Activated B cell treated with CpG ODN at 0.5 μM for 24 hours (primary cell): ENCODE measurements at regions of chr18 and their contacts with region 1.

Region 1: DNA sequence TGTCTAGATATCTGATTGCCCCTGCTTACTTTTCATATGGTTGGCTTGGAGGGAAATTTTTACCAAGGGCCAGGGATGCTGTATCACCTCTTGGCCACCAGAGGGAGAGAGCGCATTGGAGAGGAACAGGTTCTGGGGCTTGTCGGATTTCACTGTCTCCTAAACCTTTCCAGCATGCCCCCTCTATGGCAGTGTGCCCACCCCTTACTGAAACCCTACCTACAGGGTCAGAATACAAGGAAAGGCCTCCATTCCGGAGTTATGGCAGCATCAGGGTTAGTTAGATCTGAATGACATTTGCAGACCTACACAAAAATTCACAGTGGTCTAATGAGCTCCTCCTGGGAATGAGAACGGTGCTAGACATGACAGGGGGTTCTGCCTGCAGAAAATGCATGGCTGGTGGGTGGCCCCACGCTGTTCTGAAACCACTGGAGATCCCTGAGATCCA is 5.8 kb downstream of the SLC14A2 start:
- DNase-seq: no peak
- ATAC-seq: peak; percentile 64
- H3K4me3 Mint-ChIP-seq: no peak overlapping the region
- H3K27ac Mint-ChIP-seq: no peak overlapping the region
- H3K4me1 Mint-ChIP-seq: no peaks in the 10 kb centered on the region
- H3K27me3 Mint-ChIP-seq: peaks cover 13% of the 10 kb centered on the region
- CTCF ChIP-seq: peak; percentile 96

Region 2: DNA sequence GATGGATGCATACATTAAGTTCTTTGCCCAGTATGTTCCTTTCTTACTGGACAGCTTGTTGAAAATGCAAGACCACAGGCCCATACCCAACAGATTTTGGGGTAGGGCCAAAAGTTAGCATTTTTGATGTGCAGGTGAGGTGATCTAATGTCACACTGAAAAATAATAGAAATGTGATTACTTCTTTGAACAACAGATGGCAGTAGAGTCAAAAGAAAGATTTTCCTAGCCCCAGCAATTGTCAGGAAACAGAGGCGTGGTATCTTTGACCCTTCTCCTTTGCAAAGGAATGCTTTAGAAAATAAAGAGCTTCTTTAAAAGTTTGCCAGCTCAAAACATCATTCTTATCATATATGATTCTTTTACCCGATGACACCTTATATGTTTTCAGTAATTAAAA is 2000.2 kb before region 1 on chr18:
- CTCF ChIA-PET with region 1: no interaction called
- POLR2A ChIA-PET with region 1: no interaction called
- intact Hi-C with region 1: loop called (anchors 2 kb)
- DNase-seq: no peak
- ATAC-seq: no peak
- H3K4me3 Mint-ChIP-seq: no peak overlapping the region
- H3K27ac Mint-ChIP-seq: no peak overlapping the region
- H3K4me1 Mint-ChIP-seq: no peaks in the 10 kb centered on the region
- H3K27me3 Mint-ChIP-seq: peaks cover 5% of the 10 kb centered on the region
- CTCF ChIP-seq: no peak

Region 3: GRCh38 chr18:45608400-45608799 is 12.7 kb before region 1 on chr18:
- CTCF ChIA-PET with region 1: interaction called, 13 read pairs
- POLR2A ChIA-PET with region 1: no interaction called
- intact Hi-C with region 1: no loop called
- DNase-seq: no peak
- ATAC-seq: no peak
- H3K4me3 Mint-ChIP-seq: no peak overlapping the region
- H3K27ac Mint-ChIP-seq: no peak overlapping the region
- H3K4me1 Mint-ChIP-seq: no peaks in the 10 kb centered on the region
- H3K27me3 Mint-ChIP-seq: no peaks in the 10 kb centered on the region
- CTCF ChIP-seq: no peak

Region 4: GRCh38 chr18:45910405-45911023 is 289.4 kb after region 1 on chr18:
- CTCF ChIA-PET with region 1: no interaction called
- POLR2A ChIA-PET with region 1: no interaction called
- intact Hi-C with region 1: loop called (anchors 2 kb)
- DNase-seq: peak; percentile 23
- ATAC-seq: peak; percentile 72
- H3K4me3 Mint-ChIP-seq: no peak overlapping the region
- H3K27ac Mint-ChIP-seq: no peak overlapping the region
- H3K4me1 Mint-ChIP-seq: no peaks in the 10 kb centered on the region
- H3K27me3 Mint-ChIP-seq: no peaks in the 10 kb centered on the region
- CTCF ChIP-seq: peak; percentile 42

Region 5: DNA sequence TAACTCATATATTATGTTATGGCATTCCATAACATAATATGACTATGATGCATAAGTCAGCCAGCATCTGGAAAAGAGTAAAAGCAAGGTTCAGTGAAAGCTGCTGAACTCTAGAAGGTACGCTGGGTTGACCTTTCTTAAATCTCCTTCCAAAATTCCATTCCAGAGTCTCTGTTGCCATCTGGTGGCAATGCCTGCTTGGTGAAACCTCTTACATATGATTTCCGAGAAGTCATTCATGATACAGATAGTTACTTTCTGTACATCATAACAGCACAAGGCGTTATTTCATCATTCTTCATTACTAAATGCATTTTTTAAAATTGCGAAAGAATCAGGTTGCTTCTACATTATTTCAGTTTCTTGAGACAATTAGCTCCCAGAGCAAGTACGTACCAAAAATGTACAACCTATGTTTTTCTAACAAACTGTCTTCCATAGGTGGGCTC is 353.0 kb after region 1 on chr18:
- CTCF ChIA-PET with region 1: no interaction called
- POLR2A ChIA-PET with region 1: no interaction called
- intact Hi-C with region 1: loop called (anchors 1 kb)
- DNase-seq: no peak
- ATAC-seq: peak; percentile 54
- H3K4me3 Mint-ChIP-seq: no peak overlapping the region
- H3K27ac Mint-ChIP-seq: no peak overlapping the region
- H3K4me1 Mint-ChIP-seq: peaks cover 4% of the 10 kb centered on the region
- H3K27me3 Mint-ChIP-seq: no peaks in the 10 kb centered on the region
- CTCF ChIP-seq: no peak

Region 6: DNA sequence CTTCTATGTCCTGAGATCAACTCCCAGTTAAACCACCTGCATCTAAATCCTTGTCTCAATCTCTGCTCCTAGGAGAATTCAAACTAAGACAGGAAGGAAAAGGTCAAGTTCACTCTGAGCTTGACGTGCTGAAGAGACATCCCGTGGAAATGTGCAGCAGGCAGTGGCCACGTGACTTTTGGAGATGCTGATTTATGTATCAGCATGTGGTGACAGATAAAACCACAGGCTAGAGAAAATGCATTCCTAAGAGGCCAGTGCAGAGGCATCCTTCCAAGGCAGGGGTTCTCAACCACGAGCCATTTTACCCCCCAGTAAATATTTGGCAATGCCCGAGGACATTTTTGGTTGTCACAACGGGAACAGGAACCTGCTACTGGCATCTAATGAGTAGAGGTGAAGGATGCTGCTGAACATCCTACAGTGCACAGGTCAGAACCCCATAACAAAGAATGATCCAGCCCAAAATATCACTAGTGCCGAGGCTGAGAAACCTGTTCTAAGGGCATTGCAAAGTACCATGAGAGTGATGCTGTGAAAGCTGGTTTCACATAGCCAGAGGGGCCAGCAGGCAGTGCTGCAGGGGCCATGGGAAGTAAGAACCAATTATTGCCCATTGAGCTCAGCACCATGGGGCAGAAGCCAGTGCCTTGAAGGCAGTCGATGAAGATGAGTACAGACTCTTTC is 657.5 kb after region 1 on chr18:
- CTCF ChIA-PET with region 1: no interaction called
- POLR2A ChIA-PET with region 1: no interaction called
- intact Hi-C with region 1: no loop called
- DNase-seq: no peak
- ATAC-seq: no peak
- H3K4me3 Mint-ChIP-seq: no peak overlapping the region
- H3K27ac Mint-ChIP-seq: no peak overlapping the region
- H3K4me1 Mint-ChIP-seq: peaks cover 4% of the 10 kb centered on the region
- H3K27me3 Mint-ChIP-seq: no peaks in the 10 kb centered on the region
- CTCF ChIP-seq: no peak

Region 7: DNA sequence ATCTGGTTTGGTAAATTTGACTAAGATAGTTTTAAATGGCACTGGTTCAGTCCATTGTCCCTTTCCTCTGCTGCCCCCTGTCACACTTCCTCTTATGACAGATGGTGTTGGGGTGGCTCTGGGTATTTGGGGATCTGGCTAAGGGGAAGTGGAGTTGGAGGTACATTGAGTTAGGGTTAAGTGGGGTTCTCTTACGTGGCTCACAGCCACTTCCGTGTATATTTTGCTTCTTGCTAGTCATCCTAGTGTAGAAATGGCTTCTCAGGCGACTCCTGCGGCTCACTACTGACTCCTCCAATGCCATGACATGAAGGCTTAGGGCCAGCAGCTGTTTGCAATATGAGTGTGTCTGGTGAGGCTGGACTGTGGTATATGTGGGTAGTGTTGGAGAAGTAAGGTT is 670.1 kb after region 1 on chr18:
- CTCF ChIA-PET with region 1: no interaction called
- POLR2A ChIA-PET with region 1: no interaction called
- intact Hi-C with region 1: no loop called
- DNase-seq: no peak
- ATAC-seq: no peak
- H3K4me3 Mint-ChIP-seq: no peak overlapping the region
- H3K27ac Mint-ChIP-seq: no peak overlapping the region
- H3K4me1 Mint-ChIP-seq: peaks cover 7% of the 10 kb centered on the region
- H3K27me3 Mint-ChIP-seq: no peaks in the 10 kb centered on the region
- CTCF ChIP-seq: no peak